Dendritic cell treated with granulocyte-macrophage colony-stimulating factor and Interleukin-4, amounts not matched to agents 40 ng/mL and 50 ng/mL, for 4 days (primary cell): ENCODE measurements at regions of chr6 and their contacts with region 1.

Region 1: DNA sequence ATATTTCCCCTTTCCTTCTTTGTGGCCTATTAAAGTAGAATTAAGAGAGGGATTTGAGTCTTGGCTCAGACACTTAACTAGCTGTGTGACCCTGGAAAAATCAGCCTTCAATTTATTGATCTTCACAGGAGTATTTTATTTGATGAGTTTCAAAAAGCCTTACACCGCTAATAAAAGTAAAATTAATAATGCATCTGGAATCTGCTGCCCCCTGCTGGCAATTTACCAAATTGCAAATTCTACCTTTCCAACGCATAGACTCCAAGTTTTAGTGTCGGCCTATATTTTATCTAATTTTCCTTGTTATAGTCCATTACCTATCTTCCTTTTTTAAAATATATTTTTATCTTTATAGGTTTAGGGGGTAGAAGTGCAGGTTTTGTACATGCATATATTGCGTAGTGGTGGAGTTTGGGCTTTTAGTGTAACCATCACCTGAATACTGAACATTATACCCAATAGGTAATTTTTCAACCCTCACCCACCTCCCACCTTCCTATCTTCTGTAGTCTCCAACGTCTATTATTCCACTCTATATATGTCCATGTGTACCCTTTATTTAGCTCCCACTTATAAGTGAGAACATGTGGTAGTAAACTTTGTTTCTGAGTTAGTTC is 46.3 kb downstream of the GOPC start:
- H3K4me3 Mint-ChIP-seq: no peak overlapping the region
- H3K27ac Mint-ChIP-seq: no peak overlapping the region
- H3K4me1 Mint-ChIP-seq: no peaks in the 10 kb centered on the region
- H3K27me3 Mint-ChIP-seq: peaks cover 2% of the 10 kb centered on the region

Region 2: DNA sequence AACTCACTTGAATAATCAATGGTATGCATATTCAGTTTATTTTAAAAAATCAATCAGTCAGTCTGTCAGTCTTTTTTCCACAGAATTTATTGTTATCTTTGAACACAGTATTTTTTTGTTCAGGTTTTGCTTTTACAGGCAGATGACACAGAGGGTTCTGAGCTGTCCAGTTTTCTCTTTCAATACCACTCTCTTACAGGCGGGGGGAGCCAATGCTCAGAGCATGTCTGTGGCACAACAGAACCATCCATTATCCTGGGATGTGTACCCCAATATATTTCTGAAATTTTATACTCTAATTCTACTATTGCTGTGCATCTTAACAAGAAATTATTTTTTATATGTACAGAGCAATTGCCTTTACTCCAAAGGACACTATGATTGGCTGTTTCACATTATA is 151.4 kb before region 1 on chr6:
- intact Hi-C with region 1: no loop called
- H3K4me3 Mint-ChIP-seq: no peak overlapping the region
- H3K27ac Mint-ChIP-seq: no peak overlapping the region
- H3K4me1 Mint-ChIP-seq: no peaks in the 10 kb centered on the region
- H3K27me3 Mint-ChIP-seq: no peaks in the 10 kb centered on the region

Region 3: DNA sequence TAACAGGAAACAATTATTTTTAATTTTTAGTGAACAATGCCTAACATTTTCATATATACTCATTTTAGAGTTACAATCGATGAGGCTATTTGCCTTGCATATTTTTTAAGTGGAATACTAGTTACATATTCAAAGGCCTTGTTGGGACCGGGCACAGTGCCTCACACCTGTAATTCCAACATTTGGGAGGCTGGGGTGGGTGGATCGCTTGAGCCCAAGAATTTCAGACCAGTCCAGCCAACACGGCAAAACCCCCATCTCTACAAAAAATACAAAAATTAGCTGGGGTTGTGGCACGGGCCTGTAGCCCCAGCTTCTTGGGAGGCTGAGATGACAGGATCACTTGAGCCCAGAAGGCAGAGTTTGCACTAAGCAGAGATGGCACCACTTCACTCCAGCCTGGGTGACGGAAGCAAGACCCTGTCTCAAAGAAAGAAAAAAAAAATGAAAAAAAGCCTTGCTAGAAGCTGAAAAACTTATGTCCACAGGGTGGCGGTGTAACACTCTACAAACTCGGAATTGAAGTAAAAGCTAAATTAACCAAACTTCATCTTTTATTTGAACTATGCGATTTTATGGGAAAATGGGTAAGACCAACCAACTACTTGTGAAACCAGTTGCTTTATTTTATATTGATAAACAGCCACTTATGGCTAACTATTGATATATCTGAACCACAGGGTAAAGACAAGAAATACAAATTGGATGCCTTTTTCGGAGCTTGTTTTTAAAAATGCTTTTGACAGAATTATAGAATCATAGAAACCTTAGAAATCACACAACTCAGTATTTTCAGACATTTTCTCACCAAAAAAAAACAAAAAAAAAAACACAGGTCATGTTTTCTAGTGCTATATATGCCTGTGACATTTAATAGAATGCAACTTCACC is 106.2 kb before region 1 on chr6:
- intact Hi-C with region 1: loop called (anchors 1 kb)
- H3K4me3 Mint-ChIP-seq: no peak overlapping the region
- H3K27ac Mint-ChIP-seq: no peak overlapping the region
- H3K4me1 Mint-ChIP-seq: peaks cover 6% of the 10 kb centered on the region
- H3K27me3 Mint-ChIP-seq: peaks cover 27% of the 10 kb centered on the region